GM23248 (cell line): ENCODE measurements at regions of chr14 and their contacts with region 1.

Region 1: DNA sequence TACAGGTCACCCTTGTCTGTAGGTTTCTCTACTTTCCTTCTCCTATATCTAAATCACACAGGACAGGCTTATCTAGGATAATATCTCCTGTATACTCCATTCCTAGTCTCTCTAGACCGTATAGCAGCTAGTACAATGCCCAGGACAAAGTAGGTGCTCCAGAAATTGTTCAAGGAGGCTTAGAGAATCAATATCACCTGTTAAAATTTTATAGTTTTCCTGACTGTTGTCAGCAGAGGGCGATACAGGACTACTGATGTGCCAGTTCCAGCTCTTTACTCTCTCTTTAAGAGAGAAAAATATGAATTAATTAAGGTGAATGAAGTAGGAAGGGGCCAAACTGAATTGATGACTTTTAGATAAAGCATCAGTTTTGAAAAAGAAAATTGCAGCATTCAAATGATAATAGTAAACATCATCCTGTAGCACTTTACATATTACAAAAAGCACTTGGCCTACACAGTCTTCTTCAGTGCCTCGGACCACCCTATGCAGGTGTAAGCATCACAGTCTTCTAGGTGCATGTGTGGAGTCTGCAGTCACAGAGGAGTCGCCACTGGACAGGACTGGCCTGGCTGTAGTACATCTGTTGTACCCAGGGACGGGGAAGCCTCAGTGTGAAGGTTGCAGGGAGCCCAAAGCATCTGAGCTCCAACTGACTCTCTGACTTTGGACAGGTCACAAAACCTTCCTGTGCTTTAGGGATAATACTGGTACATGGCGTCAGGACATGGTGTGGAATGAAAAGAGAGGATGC is 61.9 kb upstream of the MAX start:
- DNase-seq: peak; percentile 70
- H3K4me3 ChIP-seq: no peak overlapping the region
- H3K27ac ChIP-seq: no peak overlapping the region
- H3K4me1 ChIP-seq: peaks cover 4% of the 10 kb centered on the region
- H3K27me3 ChIP-seq: no peaks in the 10 kb centered on the region

Region 2: DNA sequence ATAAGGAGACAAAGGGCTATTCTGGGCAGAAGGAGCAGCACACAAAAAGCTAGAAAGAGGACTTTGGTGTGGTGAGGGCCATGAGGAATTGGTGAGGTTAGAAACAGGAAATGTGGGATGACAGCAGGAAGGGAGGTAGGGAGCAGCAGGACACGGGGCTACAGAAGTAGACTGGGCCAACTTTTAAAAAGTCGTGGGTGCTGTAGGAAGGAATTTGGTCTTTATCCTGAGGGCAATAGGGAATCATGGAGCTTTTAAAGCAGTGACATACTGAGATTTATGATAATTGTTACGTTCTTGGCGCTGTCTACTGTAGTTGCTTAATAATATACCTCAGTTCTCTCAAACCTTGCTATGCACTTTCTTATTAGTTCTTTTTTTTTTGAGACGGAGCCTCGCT is 258.2 kb before region 1 on chr14:
- in situ Hi-C with region 1: no loop called
- DNase-seq: no peak
- H3K4me3 ChIP-seq: no peak overlapping the region
- H3K27ac ChIP-seq: no peak overlapping the region
- H3K4me1 ChIP-seq: no peaks in the 10 kb centered on the region
- H3K27me3 ChIP-seq: peaks cover 23% of the 10 kb centered on the region; the same call in 1 of the 2 replicates

Region 3: GRCh38 chr14:65019944-65020566 is 144.2 kb before region 1 on chr14:
- in situ Hi-C with region 1: no loop called
- DNase-seq: peak; percentile 84
- H3K4me3 ChIP-seq: no peak overlapping the region
- H3K27ac ChIP-seq: no peak overlapping the region
- H3K4me1 ChIP-seq: no peaks in the 10 kb centered on the region
- H3K27me3 ChIP-seq: no peaks in the 10 kb centered on the region

Region 4: GRCh38 chr14:65356327-65356852 is 192.1 kb after region 1 on chr14:
- in situ Hi-C with region 1: no loop called
- DNase-seq: peak; percentile 95
- H3K4me3 ChIP-seq: no peak overlapping the region
- H3K27ac ChIP-seq: peak overlapping the region; percentile 9; the same call in 1 of the 2 replicates
- H3K4me1 ChIP-seq: peaks cover 25% of the 10 kb centered on the region
- H3K27me3 ChIP-seq: no peaks in the 10 kb centered on the region

Region 5: DNA sequence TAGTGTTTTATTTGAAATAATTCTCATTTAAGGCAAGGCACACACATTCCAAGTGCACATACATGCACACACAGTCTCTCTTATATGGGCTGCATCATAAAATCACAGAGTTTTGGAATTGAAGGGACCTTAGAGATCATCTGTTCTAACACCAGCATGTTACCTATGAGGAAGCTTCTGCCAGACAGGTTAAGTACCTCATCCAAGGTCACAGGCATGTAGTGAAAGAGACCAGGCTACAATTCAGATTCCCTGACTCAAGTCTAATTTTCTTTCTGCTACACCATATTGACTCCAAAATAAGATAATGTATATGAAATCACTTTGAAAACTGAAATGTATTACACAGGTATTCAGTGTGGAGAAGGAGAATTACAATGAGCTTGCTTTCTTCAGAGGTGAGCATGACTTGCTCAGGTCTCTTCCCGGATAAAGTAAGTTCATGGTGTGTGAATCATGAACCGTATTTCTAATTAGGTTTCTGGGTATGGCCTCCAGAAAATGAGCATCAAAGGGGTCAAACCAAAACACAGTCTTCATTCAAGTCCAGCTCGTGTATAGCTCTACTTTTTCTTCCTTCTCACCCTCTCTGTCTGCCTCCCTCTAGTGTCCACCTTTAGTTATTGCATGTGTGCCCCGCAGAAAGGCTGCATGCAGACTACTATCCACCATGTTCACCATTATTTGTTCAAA is 660.2 kb after region 1 on chr14:
- in situ Hi-C with region 1: loop called (anchors 10 kb)
- DNase-seq: peak; percentile 71
- H3K4me3 ChIP-seq: no peak overlapping the region
- H3K27ac ChIP-seq: no peak overlapping the region
- H3K4me1 ChIP-seq: no peaks in the 10 kb centered on the region
- H3K27me3 ChIP-seq: peaks cover 10% of the 10 kb centered on the region

Region 6: GRCh38 chr14:65958664-65959562 is 794.7 kb after region 1 on chr14:
- in situ Hi-C with region 1: loop called (anchors 10 kb)
- DNase-seq: peak; percentile 54
- H3K4me3 ChIP-seq: no peak overlapping the region
- H3K27ac ChIP-seq: no peak overlapping the region
- H3K4me1 ChIP-seq: no peaks in the 10 kb centered on the region
- H3K27me3 ChIP-seq: peaks cover 8% of the 10 kb centered on the region

Region 7: DNA sequence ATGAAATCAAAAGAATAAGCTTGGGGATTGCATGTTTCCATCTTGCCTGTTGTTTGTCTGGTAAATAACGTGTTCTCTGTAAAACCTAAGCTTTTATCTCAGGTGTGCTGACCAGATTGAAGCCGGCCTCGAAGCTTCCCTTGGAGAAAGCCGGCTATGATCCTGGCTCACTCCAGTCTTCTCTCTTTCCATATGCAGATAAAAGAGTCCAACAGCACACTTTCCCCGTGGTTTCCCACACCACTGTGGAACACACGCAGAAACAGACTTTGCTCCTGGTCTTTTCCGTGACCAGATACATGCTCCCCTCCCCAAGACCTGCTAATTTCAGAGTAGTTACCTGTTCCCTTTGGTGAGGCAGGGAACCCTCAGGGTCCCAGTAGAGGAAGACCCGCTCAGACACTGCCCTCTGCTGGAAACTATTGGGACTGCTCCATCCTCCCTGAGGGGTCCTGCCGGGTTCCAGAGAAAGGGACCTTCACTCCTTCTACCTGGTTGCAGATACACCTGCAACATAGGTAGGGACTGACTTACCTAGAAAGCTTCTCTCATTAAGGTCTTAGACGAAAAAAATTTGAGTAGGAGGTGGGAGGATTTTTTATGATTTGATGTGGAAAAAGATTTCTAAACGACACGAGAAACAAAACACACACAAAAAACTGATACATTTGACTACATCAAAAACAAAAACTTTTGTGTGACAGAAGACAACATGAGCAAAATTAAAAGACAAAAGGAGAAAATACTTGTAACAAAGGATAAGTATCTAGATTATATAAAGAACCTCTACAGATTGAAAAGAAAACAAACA is 906.5 kb after region 1 on chr14:
- in situ Hi-C with region 1: loop called (anchors 25 kb)
- DNase-seq: peak; percentile 29
- H3K4me3 ChIP-seq: no peak overlapping the region
- H3K27ac ChIP-seq: no peak overlapping the region
- H3K4me1 ChIP-seq: peaks cover 23% of the 10 kb centered on the region
- H3K27me3 ChIP-seq: no peaks in the 10 kb centered on the region